Dorsolateral prefrontal cortex (tissue), 120 donors: ENCODE measurements at regions of chr12 and their contacts with region 1.

Region 1: DNA sequence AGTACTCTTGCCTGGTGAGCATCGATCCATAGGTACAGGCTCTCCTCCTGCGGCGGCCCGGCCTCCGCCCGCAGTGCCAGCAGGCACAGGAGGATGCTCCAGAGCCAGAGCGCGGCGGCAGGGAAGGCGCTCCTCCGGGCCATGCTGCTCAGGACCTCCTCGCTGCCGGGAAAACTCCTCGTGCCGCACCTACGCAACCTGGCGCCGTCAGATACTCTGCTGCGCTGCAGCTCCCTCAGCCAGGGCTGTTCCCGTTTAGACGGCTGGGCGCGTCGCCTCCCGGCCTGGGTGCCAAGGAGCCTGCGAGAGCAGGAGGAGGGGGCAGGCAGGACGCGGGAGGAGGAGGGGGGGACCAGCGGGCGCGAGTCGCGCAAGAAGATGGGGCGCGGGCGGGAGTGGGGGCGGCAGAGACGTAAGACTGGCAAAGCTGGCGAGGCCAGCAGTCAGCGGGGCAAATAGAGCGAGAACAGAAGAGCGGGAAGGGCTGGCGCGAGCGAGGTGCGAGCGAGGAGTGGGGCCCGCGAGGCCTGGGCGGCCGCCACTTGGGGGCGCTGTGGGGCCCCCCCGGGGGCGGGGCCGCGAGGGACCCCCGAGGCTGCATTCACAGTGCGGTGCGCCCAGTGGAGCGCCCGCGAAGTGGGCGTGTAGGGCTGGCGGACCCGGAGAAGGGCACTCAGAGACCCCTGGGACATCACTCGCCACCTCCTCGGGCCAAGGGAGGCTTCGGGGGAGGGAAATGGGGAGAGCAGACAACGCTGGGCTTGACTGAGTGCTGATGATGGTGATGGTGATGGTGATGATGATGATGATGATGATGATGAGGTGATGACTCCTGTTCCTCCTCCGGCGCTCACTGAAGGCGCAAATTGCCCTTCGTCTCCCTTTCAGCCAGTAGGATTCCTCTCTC is at the start of gene WIF1:
- DNase-seq: peak in 6 of 10 donors; percentile 20 to 52 (median 43)
- H3K4me3 ChIP-seq: peak within 1 kb of the TSS; percentile 12 to 66 (median 45)
- H3K27ac ChIP-seq: no peak within 1 kb of the TSS
- H3K27me3 ChIP-seq: peaks cover 0 to 99% (median 66%) of the 10 kb centered on the region in 45 donors
- CTCF ChIP-seq: peak in 38 of 56 donors; percentile 13 to 58 (median 26)
- total RNA-seq, gene WIF1: 1.5 to 77.3 (median 22.0) TPM

Region 2: GRCh38 chr12:64796208-64796845 is 325.0 kb before region 1 on chr12:
- intact Hi-C with region 1: loop called (anchors 5 to 10 kb)
- DNase-seq: peak in 2 of 10 donors; percentile 39 to 54
- H3K4me3 ChIP-seq: no peak overlapping the region
- H3K27ac ChIP-seq: no peak overlapping the region
- H3K27me3 ChIP-seq: no peaks in the 10 kb centered on the region
- CTCF ChIP-seq: peak; percentile 66 to 91 (median 82)

Region 3: DNA sequence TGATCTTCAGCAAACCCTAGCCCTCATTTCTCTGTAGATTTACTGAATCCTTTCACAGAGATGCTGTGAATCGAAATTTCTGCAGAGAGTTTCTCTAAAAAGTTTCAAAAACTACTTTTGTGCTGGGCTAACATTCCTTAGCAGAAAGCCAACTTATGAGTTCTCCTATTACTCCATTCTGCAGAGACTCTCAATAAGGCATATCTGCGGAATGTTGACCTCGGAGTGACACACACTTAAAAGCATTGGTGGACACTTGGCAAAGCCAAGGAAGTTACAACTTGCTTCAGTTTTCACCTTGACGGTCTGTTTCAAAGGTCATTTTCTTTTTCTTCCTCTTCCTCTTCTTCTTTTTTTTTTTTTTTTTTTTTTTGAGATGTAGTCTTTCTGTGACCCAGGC is 76.0 kb before region 1 on chr12:
- intact Hi-C with region 1: no loop called
- DNase-seq: no peak
- H3K4me3 ChIP-seq: no peak overlapping the region
- H3K27ac ChIP-seq: no peak overlapping the region
- H3K27me3 ChIP-seq: peaks cover 0 to 38% (median 3%) of the 10 kb centered on the region in 45 donors
- CTCF ChIP-seq: no peak

Region 4: GRCh38 chr12:65278576-65279368 is 157.5 kb after region 1 on chr12 and contains the start of gene MSRB3:
- intact Hi-C with region 1: no loop called
- DNase-seq: peak; percentile 35 to 83 (median 65)
- H3K4me3 ChIP-seq: peak within 1 kb of the TSS; percentile 61 to 93 (median 81)
- H3K27ac ChIP-seq: peak within 1 kb of the TSS in 54 of 59 donors; percentile 7 to 87 (median 74)
- H3K27me3 ChIP-seq: no peaks in the 10 kb centered on the region
- CTCF ChIP-seq: peak in 2 of 56 donors; percentile 3 to 9
- total RNA-seq, gene MSRB3: 9.5 to 45.8 (median 20.7) TPM